Motor neuron (in vitro differentiated cells): ENCODE measurements at regions of chr9 and their contacts with region 1.

Region 1: GRCh38 chr9:33737811-33738606 is 57.4 kb upstream of the PRSS3 start:
- ATAC-seq: peak; percentile 36 to 90 (median 70)
- H3K4me3 ChIP-seq: no peak overlapping the region
- H3K27ac ChIP-seq: no peak overlapping the region
- H3K4me1 ChIP-seq: peaks cover 0 to 2% of the 10 kb centered on the region in 2 donors

Region 2: DNA sequence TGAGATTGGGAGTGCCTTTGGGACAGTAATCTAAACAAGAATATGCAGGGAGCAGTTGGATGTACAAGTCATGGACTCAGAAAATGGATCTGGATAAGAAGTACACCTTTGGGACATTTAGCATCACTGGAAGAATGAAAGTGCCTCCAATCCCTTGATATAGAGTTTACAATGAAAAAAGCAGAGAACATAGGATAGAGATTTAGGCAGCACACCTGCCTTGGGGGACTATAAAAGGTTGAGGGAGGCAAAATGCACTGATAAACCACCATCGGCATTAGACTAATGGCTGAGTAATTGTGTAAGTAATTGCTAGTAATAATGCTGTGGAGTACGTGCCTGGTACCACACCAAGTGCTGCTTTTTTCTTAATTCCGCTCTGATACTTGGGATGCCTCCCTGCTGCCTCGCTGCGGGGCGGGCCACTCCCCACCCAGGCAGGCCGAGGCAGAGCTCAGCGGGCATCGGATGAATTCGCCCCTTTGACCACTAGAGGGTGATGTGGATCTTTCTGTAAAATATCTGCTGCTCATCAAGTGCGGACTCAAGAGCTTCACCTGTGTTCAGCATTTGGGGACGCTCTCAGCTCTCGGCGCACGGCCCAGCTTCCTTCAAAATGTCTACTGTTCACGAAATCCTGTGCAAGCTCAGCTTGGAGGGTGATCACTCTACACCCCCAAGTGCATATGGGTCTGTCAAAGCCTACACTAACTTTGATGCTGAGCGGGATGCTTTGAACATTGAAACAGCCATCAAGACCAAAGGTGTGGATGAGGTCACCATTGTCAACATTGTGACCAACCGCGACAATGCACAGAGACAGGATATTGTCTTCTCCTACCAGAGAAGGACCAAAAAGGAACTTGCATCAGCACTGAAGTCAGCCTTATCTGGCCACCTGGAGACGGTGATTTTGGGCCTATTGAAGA is 114.1 kb before region 1 on chr9:
- in situ Hi-C with region 1: loop called in 2 of 9 experiments (anchors 25 kb)
- ATAC-seq: peak; percentile 74 to 95 (median 92)
- H3K4me3 ChIP-seq: no peak overlapping the region
- H3K27ac ChIP-seq: no peak overlapping the region
- H3K4me1 ChIP-seq: no peaks in the 10 kb centered on the region

Region 3: GRCh38 chr9:33638391-33638915 is 99.6 kb before region 1 on chr9:
- in situ Hi-C with region 1: loop called in 1 of 9 experiments (anchors 25 kb)
- ATAC-seq: no peak
- H3K4me3 ChIP-seq: no peak overlapping the region
- H3K27ac ChIP-seq: no peak overlapping the region
- H3K4me1 ChIP-seq: no peaks in the 10 kb centered on the region

Region 4: GRCh38 chr9:34546834-34547827 is 809.1 kb after region 1 on chr9:
- in situ Hi-C with region 1: no loop called
- ATAC-seq: peak; percentile 41 to 89 (median 62)
- H3K4me3 ChIP-seq: no peak overlapping the region
- H3K27ac ChIP-seq: no peak overlapping the region
- H3K4me1 ChIP-seq: peaks cover 2 to 9% of the 10 kb centered on the region in 2 donors